Calu3 (cell line): ENCODE measurements at regions of chr18 and their contacts with region 1.

Region 1: GRCh38 chr18:25921677-25922421 is 168.6 kb downstream of the SS18 start:
- DNase-seq: peak; percentile 63
- H3K4me3 Mint-ChIP-seq: no peak overlapping the region
- H3K27ac Mint-ChIP-seq: no peak overlapping the region
- H3K4me1 Mint-ChIP-seq: no peaks in the 10 kb centered on the region
- H3K27me3 Mint-ChIP-seq: peaks cover 28% of the 10 kb centered on the region
- CTCF ChIP-seq: peak; percentile 57

Region 2: GRCh38 chr18:26022585-26022984 is 100.7 kb after region 1 on chr18:
- CTCF ChIA-PET with region 1: interaction called, 3 read pairs
- intact Hi-C with region 1: loop called (anchors 5 kb)
- DNase-seq: no peak
- H3K4me3 Mint-ChIP-seq: no peak overlapping the region
- H3K27ac Mint-ChIP-seq: no peak overlapping the region
- H3K4me1 Mint-ChIP-seq: no peaks in the 10 kb centered on the region
- H3K27me3 Mint-ChIP-seq: no peaks in the 10 kb centered on the region
- CTCF ChIP-seq: no peak

Region 3: GRCh38 chr18:26090130-26091046 is 168.5 kb after region 1 on chr18 and contains the start of gene SS18:
- CTCF ChIA-PET with region 1: no interaction called
- intact Hi-C with region 1: no loop called
- DNase-seq: peak; percentile 94
- H3K4me3 Mint-ChIP-seq: peak within 1 kb of the TSS; percentile 99
- H3K27ac Mint-ChIP-seq: peak within 1 kb of the TSS; percentile 86
- H3K4me1 Mint-ChIP-seq: peaks cover 17% of the 10 kb centered on the region
- H3K27me3 Mint-ChIP-seq: no peaks in the 10 kb centered on the region
- CTCF ChIP-seq: no peak
- total RNA-seq, gene SS18: 86.6 and 89.9 TPM in 2 replicates

Region 4: DNA sequence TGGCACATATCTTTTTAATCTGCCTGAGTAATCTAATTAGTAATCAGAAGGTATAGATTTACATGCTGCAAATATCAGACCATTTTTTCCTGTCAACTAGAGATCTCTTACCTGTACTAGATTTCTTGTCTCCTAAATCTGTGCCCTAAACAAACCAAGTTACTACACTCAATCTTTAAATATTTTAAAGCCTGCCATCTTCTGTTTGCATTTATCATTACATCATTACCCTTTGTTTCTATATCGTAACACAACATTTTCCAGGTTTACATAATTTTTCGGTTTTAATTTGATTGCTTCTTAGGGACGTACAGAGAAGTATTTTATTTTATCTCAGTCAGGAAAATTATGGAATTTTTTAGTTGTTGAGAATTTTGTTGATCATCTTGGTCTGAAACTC is 237.5 kb after region 1 on chr18:
- CTCF ChIA-PET with region 1: no interaction called
- intact Hi-C with region 1: loop called (anchors 1 kb)
- DNase-seq: no peak
- H3K4me3 Mint-ChIP-seq: no peak overlapping the region
- H3K27ac Mint-ChIP-seq: no peak overlapping the region
- H3K4me1 Mint-ChIP-seq: no peaks in the 10 kb centered on the region
- H3K27me3 Mint-ChIP-seq: peaks cover 12% of the 10 kb centered on the region
- CTCF ChIP-seq: no peak